IMR-90 (cell line): ENCODE measurements at regions of chr3 and their contacts with region 1.

Region 1: GRCh38 chr3:113136071-113136470 is 75.3 kb upstream of the BOC start:
- DNase-seq: peak; percentile 27
- ATAC-seq: peak; percentile 21; the same call in 1 of the 2 replicates
- H3K4me3 ChIP-seq: no peak overlapping the region
- H3K27ac ChIP-seq: peak overlapping the region; percentile 8; the same call in 1 of the 2 replicates
- H3K4me1 ChIP-seq: peaks cover 4% of the 10 kb centered on the region; the same call in 1 of the 2 replicates
- H3K27me3 ChIP-seq: peaks cover 3% of the 10 kb centered on the region
- CTCF ChIP-seq: peak; percentile 47
- POLR2A ChIP-seq: no peak
- RAD21 ChIP-seq: peak; percentile 58

Region 2: GRCh38 chr3:113117511-113118234 is 18.4 kb before region 1 on chr3:
- CTCF ChIA-PET with region 1: no interaction called
- POLR2A ChIA-PET with region 1: no interaction called
- dilution Hi-C with region 1: no loop called
- in situ Hi-C with region 1: no loop called
- intact Hi-C with region 1: no loop called
- DNase-seq: peak; percentile 90
- ATAC-seq: peak; percentile 80
- H3K4me3 ChIP-seq: no peak overlapping the region
- H3K27ac ChIP-seq: peak overlapping the region; percentile 39; the same call in 1 of the 2 replicates
- H3K4me1 ChIP-seq: peaks cover 4% of the 10 kb centered on the region
- H3K27me3 ChIP-seq: no peaks in the 10 kb centered on the region; the same call in 1 of the 2 replicates
- CTCF ChIP-seq: no peak
- POLR2A ChIP-seq: no peak
- RAD21 ChIP-seq: no peak

Region 3: GRCh38 chr3:113287803-113288648 is 152.0 kb after region 1 on chr3:
- CTCF ChIA-PET with region 1: interaction called, 5 read pairs
- POLR2A ChIA-PET with region 1: no interaction called
- dilution Hi-C with region 1: no loop called
- in situ Hi-C with region 1: no loop called
- intact Hi-C with region 1: loop called (anchors 1 kb)
- DNase-seq: peak; percentile 72
- ATAC-seq: peak; percentile 64
- H3K4me3 ChIP-seq: no peak overlapping the region
- H3K27ac ChIP-seq: peak overlapping the region; percentile 59
- H3K4me1 ChIP-seq: peaks cover 14% of the 10 kb centered on the region
- H3K27me3 ChIP-seq: peaks cover 14% of the 10 kb centered on the region
- CTCF ChIP-seq: peak; percentile 99
- POLR2A ChIP-seq: peak; percentile 59; the same call in 1 of the 2 replicates
- RAD21 ChIP-seq: peak; percentile 97

Region 4: GRCh38 chr3:113405180-113405579 is 269.1 kb after region 1 on chr3:
- CTCF ChIA-PET with region 1: no interaction called
- POLR2A ChIA-PET with region 1: interaction called, 12 read pairs
- dilution Hi-C with region 1: no loop called
- in situ Hi-C with region 1: no loop called
- intact Hi-C with region 1: no loop called
- DNase-seq: peak; percentile 62
- ATAC-seq: no peak
- H3K4me3 ChIP-seq: no peak overlapping the region
- H3K27ac ChIP-seq: no peak overlapping the region
- H3K4me1 ChIP-seq: no peaks in the 10 kb centered on the region
- H3K27me3 ChIP-seq: no peaks in the 10 kb centered on the region
- CTCF ChIP-seq: no peak
- POLR2A ChIP-seq: no peak
- RAD21 ChIP-seq: no peak